ENCODE measurements at regions of chr14 and their contacts with region 1.

Region 1: GRCh38 chr14:74945823-74946682 is 9.3 kb downstream of the PGF start:
- DNase-seq: peak; percentile 55 to 81 (median 60)
- H3K4me3 ChIP-seq: no peak overlapping the region
- H3K4me3 Mint-ChIP-seq: peak overlapping the region in 5 of 7 donors; percentile 33 to 72 (median 49)
- H3K27ac ChIP-seq: no peak overlapping the region
- H3K27ac Mint-ChIP-seq: peak overlapping the region in 7 of 8 donors; percentile 8 to 85 (median 66)
- H3K4me1 ChIP-seq: peaks cover 31% of the 10 kb centered on the region
- H3K4me1 Mint-ChIP-seq: peaks cover 21 to 30% (median 27%) of the 10 kb centered on the region in 3 donors
- H3K27me3 ChIP-seq: no peaks in the 10 kb centered on the region
- H3K27me3 Mint-ChIP-seq: peaks cover 2 to 6% of the 10 kb centered on the region in 2 donors

Region 2: DNA sequence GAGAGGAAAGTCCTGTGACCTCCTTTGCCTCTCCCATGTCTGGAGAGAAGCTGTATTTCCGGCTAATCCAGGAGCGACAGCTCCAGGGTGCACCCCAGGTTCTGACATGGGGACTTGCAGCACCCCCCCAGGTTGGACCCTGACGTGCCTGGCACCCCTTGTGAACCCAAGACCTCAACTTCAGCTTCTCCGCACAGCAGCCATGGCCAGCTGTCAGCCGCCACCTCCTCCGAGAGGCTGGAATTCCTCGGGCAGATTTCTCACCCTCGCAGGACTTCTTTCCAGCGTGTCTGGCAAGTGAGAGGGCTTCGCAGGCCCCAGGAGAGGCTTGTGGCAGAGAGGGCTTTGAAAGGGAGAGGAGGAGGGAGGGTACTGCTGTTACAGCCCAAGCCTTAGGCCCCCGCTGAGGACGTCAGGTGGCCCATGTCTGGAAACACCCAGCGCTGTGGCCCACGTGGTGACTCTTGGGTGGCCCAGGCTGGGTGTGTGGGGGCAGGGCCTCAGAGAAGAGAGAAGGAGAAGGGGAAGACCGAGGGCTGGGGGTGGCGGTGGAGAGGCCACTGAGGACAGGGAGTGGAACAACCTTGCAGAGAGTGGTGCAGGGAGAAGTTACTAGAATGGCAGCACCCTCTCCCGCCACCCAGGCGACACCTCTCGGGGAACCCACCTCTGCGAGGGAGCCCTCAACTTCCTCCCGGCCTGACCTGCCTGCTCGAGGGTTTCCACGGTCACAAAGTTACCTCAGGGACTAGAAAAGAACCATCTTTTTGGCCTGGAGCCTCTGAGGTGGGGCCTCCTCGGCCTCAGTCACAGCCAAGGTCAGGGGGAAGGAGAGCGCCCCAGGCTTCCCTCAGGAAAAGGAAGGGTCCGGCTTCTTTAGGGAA is 11.3 kb before region 1 on chr14:
- CTCF ChIA-PET with region 1: interaction called, 11 read pairs
- POLR2A ChIA-PET with region 1: no interaction called
- DNase-seq: no peak
- H3K4me3 ChIP-seq: no peak overlapping the region
- H3K4me3 Mint-ChIP-seq: no peak overlapping the region
- H3K27ac ChIP-seq: no peak overlapping the region
- H3K27ac Mint-ChIP-seq: no peak overlapping the region
- H3K4me1 ChIP-seq: no peaks in the 10 kb centered on the region
- H3K4me1 Mint-ChIP-seq: peaks cover 12 to 21% (median 13%) of the 10 kb centered on the region in 3 donors
- H3K27me3 ChIP-seq: no peaks in the 10 kb centered on the region
- H3K27me3 Mint-ChIP-seq: peaks cover 3 to 18% of the 10 kb centered on the region in 2 donors

Region 3: DNA sequence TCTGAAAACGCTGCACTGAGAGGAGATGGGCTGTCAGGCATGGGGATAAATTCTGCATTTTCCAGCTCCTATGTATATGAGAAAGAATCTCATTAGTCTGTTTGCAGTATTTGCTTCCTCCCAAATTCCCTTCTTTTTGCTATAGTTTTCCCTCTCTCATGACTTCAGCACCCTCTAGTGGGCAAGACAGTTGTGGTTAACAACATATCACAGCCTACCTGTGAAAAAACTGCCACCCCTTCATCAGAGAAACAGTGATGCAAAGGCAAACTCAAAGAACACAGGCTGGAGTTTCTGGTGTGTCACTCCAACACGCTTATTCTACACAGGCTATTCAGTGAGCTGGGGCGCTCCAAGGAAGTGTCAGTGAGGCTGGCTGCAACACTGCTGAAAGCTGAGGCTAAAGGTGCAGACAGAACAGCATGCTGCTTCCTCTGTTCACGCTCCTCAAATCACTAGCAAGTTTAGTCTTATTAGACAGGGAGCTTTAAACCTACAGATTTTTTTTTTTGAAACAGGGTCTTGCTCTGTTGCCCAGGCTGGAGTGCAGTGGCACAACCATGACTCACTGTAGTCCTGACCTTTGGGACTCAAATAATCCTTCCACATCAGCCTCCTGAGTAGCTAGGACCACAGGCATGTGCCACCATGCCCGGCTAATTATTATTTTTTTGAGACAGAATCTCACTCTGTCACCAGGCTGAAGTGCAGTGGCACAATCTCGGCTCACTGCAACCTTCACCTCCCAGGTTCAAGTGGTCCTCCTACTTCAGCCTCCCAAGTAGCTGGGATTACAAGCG is 142.7 kb after region 1 on chr14:
- CTCF ChIA-PET with region 1: interaction called, 19 read pairs
- POLR2A ChIA-PET with region 1: no interaction called
- DNase-seq: peak in 3 of 5 donors; percentile 14 to 34 (median 32)
- H3K4me3 ChIP-seq: no peak overlapping the region
- H3K4me3 Mint-ChIP-seq: no peak overlapping the region
- H3K27ac ChIP-seq: no peak overlapping the region
- H3K27ac Mint-ChIP-seq: no peak overlapping the region
- H3K4me1 ChIP-seq: no peaks in the 10 kb centered on the region
- H3K4me1 Mint-ChIP-seq: no peaks in the 10 kb centered on the region
- H3K27me3 ChIP-seq: no peaks in the 10 kb centered on the region
- H3K27me3 Mint-ChIP-seq: no peaks in the 10 kb centered on the region